Activated CD8-positive, alpha-beta T cell treated with anti-CD3 and anti-CD28 coated beads, Interleukin-2, amount 10 ng/mL, durations not matched to agents 7 days and 5 days (primary cell): ENCODE measurements at regions of chr1 and their contacts with region 1.

Region 1: DNA sequence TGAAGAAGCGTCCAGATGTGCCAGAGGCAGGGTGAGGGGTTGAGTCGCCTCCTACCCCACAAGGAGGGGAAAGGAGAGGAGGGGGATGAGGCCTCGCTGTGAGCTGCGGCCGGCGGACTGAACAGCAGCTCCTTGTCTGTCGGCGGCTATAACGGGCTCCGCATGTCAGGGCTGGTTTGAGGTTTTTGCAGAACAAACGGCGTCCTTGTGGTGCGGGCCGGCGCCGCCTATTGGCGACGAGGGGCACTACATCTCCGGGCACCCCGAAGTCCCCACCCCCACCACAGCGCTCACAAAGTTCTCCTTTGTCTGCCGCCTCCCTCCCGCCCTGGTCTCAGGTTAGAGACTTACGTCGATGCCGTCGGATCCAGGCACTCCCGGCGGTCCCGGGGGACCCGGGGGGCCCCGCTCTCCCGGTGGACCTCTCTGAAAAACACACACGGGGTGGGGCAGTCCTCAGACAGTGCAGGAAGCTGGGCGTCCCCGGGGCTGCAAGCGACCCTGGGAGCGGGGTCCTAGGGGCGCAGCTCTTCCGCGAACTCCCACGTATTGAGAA is 1.8 kb downstream of the COL9A2 start:
- DNase-seq: peak; percentile 90
- ATAC-seq: peak; percentile 80
- H3K4me3 Mint-ChIP-seq: peak overlapping the region; percentile 74
- H3K27ac Mint-ChIP-seq: no peak overlapping the region
- H3K4me1 Mint-ChIP-seq: peaks cover 52% of the 10 kb centered on the region
- H3K27me3 Mint-ChIP-seq: peaks cover 27% of the 10 kb centered on the region

Region 2: DNA sequence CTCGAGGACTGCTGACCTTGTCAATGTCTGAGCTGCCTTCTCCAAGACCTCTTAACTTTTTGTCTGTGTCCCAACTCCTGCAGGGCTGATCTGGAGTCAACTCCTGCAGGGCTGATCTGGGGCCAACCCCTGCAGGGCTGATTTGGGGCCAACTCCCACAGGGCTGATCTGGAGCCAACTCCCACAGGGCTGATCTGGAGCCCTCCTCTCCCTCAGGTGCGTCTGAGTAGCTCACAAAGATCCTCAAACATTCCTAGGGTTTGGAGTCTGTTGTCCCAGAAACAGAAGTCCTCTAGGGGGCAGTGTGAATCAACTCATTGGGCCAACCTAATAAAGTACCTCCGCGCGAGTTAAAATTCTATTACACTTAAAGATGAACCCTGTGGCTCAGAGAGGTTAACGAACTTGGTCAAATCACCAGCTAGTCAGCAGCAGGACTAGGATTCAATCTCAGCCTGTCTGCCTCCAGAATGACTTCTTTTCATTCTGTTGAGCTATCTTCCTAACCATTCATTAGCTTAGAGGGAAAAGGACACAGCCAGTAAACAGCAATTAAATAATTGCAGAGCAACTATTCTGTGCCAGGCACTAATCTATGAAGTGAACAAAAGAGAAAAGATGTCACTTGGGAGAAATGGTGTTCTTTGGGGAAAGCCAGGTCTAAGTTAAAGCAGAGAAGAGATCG is 171.3 kb before region 1 on chr1:
- CTCF ChIA-PET with region 1: interaction called, 42 read pairs
- POLR2A ChIA-PET with region 1: no interaction called
- DNase-seq: peak; percentile 67
- ATAC-seq: peak; percentile 73
- H3K4me3 Mint-ChIP-seq: no peak overlapping the region
- H3K27ac Mint-ChIP-seq: no peak overlapping the region
- H3K4me1 Mint-ChIP-seq: peaks cover 3% of the 10 kb centered on the region
- H3K27me3 Mint-ChIP-seq: peaks cover 45% of the 10 kb centered on the region

Region 3: GRCh38 chr1:40185951-40186864 is 129.1 kb before region 1 on chr1:
- CTCF ChIA-PET with region 1: interaction called, 15 read pairs
- POLR2A ChIA-PET with region 1: interaction called, 5 read pairs
- DNase-seq: peak; percentile 60
- ATAC-seq: peak; percentile 88
- H3K4me3 Mint-ChIP-seq: no peak overlapping the region
- H3K27ac Mint-ChIP-seq: peak overlapping the region; percentile 19
- H3K4me1 Mint-ChIP-seq: peaks cover 46% of the 10 kb centered on the region
- H3K27me3 Mint-ChIP-seq: no peaks in the 10 kb centered on the region

Region 4: DNA sequence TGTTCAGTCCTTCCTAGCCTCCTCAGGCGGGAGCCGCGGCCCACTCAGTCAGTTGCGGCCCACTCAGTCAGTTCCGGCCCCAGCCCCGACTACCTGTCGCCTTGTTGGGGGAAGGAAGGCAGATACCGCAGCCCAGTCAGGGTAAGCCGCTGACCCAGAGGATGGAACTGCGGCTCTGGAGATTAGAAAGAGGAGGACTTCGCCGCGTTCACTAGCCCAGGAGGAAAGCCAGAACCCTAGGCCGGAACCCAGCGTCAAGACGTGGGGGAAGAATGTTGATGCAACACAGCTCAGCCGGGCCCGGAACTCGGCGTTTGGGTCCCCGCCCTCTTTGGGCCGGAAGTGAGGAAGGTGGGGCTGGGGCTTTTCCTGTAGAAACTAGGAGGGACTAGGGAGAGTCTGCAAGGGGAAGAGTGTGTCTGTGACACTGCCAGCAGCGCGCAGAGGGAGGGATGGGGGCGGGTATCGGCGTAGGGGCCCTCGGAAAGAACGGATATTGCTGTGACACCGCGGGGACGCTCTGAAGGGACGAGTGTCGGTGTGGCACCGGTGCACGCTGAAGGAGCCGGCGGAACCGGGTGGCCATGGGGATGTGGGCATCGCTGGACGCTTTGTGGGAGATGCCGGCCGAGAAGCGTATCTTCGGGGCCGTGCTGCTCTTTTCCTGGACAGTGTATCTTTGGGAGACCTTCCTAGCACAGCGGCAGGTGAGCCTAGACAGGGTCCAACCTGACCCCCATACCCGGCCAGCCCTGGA is 57.5 kb before region 1 on chr1 and contains the start of gene ZMPSTE24:
- CTCF ChIA-PET with region 1: interaction called, 15 read pairs
- POLR2A ChIA-PET with region 1: interaction called, 4 read pairs
- DNase-seq: peak; percentile 98
- ATAC-seq: peak; percentile 96
- H3K4me3 Mint-ChIP-seq: peak within 1 kb of the TSS; percentile 99
- H3K27ac Mint-ChIP-seq: peak within 1 kb of the TSS; percentile 100
- H3K4me1 Mint-ChIP-seq: peaks cover 49% of the 10 kb centered on the region
- H3K27me3 Mint-ChIP-seq: no peaks in the 10 kb centered on the region
- total RNA-seq, gene ZMPSTE24: 28.9 to 29.8 TPM

Region 5: DNA sequence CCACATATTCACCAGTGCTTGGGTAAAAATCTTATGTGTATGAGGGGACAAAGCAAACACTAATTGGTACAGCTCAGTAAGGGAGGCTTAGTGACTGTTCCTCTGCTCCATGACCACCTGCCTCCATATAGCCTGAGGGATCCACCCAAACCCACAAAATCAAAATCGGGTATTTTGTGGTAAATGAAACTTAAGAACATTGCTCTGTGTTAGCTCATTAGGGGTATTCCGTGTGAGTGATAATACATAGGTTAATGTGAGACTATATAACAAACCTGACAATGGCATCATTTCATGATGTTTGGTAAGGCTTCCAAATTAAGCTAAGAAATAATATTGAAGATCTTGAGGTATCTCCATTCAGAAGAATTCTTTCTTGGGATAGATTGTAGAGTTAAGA is 24.0 kb before region 1 on chr1:
- CTCF ChIA-PET with region 1: interaction called, 13 read pairs
- POLR2A ChIA-PET with region 1: no interaction called
- DNase-seq: no peak
- ATAC-seq: no peak
- H3K4me3 Mint-ChIP-seq: no peak overlapping the region
- H3K27ac Mint-ChIP-seq: no peak overlapping the region
- H3K4me1 Mint-ChIP-seq: peaks cover 6% of the 10 kb centered on the region
- H3K27me3 Mint-ChIP-seq: no peaks in the 10 kb centered on the region

Region 6: DNA sequence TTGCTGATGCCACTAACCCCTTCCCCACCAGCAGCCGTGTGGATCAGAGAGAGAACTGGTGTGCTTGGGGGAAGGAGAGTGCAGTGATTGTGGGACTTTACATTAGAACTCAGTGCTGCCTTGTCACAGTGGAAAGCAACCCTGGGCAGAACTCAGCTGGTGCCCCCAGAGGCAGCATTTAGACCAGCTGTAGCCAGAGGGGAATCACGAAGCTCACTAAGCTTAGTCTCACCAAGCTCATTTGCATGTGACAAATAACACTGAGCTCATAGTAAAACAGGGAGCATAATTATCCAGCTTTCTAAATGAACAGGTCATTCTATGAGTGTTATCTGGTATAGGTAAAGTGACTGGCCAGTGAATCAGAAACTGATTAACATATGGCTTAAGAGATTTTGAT is 48.4 kb after region 1 on chr1:
- CTCF ChIA-PET with region 1: no interaction called
- POLR2A ChIA-PET with region 1: no interaction called
- DNase-seq: no peak
- ATAC-seq: no peak
- H3K4me3 Mint-ChIP-seq: no peak overlapping the region
- H3K27ac Mint-ChIP-seq: no peak overlapping the region
- H3K4me1 Mint-ChIP-seq: peaks cover 5% of the 10 kb centered on the region
- H3K27me3 Mint-ChIP-seq: no peaks in the 10 kb centered on the region

Region 7: DNA sequence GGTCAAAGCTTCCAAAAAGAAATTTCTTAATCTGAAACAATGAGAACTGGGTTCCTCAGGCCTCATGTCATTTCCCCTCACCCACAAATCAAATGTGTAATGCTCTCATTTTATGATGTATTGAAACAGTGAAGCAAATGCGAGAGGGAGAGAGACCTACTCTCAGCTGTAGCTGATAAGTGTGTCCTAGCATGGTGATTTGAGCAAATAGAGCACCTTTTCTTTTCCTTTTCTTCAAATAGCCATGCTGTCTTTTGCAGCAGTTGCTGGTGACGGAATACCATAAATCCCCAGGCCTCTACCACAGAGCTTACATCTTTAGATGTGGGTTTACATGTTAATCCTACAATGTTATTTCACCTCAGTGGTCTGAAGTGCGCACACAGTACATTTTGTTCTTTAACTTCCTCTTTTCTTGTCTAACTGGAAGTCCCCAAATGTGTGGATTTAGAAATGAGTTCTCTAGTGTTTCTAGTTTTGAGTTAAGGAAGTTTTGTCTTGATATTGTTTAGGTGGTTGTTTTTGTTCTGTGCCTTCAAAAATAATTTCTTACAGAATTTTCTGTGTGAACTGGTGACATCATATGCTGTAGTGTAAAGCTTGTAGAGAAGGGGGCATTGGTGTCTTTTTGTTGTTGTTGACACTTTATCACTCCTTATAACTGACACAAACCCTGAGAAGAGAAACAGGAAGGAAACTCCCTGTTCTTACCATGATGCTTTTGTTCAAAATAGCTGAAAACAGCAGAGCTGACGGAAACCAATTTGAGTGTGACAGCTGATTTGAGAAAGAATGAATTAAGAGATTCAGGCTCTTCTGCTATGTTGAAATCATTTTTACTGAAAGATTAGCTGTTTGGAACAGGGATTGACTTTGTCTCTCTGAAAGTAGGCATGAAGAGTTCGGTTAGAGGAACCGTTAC is 70.4 kb after region 1 on chr1:
- CTCF ChIA-PET with region 1: interaction called, 19 read pairs
- POLR2A ChIA-PET with region 1: interaction called, 11 read pairs
- DNase-seq: peak; percentile 84
- ATAC-seq: peak; percentile 68
- H3K4me3 Mint-ChIP-seq: peak overlapping the region; percentile 79
- H3K27ac Mint-ChIP-seq: peak overlapping the region; percentile 99
- H3K4me1 Mint-ChIP-seq: peaks cover 94% of the 10 kb centered on the region
- H3K27me3 Mint-ChIP-seq: no peaks in the 10 kb centered on the region

Region 8: GRCh38 chr1:40411294-40411693 is 96.0 kb after region 1 on chr1:
- CTCF ChIA-PET with region 1: interaction called, 14 read pairs
- POLR2A ChIA-PET with region 1: no interaction called
- DNase-seq: no peak
- ATAC-seq: no peak
- H3K4me3 Mint-ChIP-seq: no peak overlapping the region
- H3K27ac Mint-ChIP-seq: no peak overlapping the region
- H3K4me1 Mint-ChIP-seq: peaks cover 32% of the 10 kb centered on the region
- H3K27me3 Mint-ChIP-seq: no peaks in the 10 kb centered on the region